Heart right ventricle (tissue), 16 donors: ENCODE measurements at regions of chr6 and their contacts with region 1.

Region 1: DNA sequence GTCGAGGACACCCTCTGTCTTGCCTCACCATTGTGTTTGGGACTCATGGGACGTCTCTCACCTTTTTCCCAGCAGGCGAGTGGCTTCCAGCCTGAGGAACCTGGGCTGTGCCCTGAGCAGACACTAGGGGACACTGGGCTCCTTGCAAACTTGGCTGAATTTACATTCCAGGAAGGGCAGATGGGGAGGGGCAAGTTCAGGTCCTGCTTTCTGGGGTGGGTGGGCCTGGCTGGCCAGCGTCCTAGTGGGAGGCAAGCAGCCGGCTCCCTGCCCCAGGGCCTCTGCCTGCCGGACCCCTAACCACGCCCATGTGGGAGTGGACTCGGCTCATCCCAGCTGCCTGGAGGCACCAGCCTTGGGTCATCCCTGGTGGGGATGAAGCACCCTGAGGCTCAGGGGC is 48.2 kb upstream of the MLN start:
- DNase-seq: no peak
- ATAC-seq: peak in 4 of 8 donors; percentile 56 to 68 (median 64)
- H3K4me3 ChIP-seq: no peak overlapping the region
- H3K27ac ChIP-seq: no peak overlapping the region
- H3K4me1 ChIP-seq: peaks cover 0 to 3% (median 0%) of the 10 kb centered on the region in 9 donors
- H3K27me3 ChIP-seq: peaks cover 0 to 79% (median 42%) of the 10 kb centered on the region in 7 donors
- CTCF ChIP-seq: peak in 7 of 9 donors; percentile 27 to 52 (median 48)

Region 2: GRCh38 chr6:34027445-34027936 is 175.5 kb after region 1 on chr6:
- intact Hi-C with region 1: loop called in 6 of 10 experiments (anchors 5 to 10 kb)
- DNase-seq: peak; percentile 9 to 49
- ATAC-seq: peak; percentile 32 to 75 (median 65)
- H3K4me3 ChIP-seq: no peak overlapping the region
- H3K27ac ChIP-seq: no peak overlapping the region
- H3K4me1 ChIP-seq: no peaks in the 10 kb centered on the region
- H3K27me3 ChIP-seq: peaks cover 0 to 73% (median 27%) of the 10 kb centered on the region in 7 donors
- CTCF ChIP-seq: peak; percentile 41 to 88 (median 73)

Region 3: GRCh38 chr6:34145161-34146020 is 293.4 kb after region 1 on chr6:
- intact Hi-C with region 1: loop called in 1 of 10 experiments (anchors 10 kb)
- DNase-seq: no peak
- ATAC-seq: peak in 7 of 8 donors; percentile 14 to 54 (median 38)
- H3K4me3 ChIP-seq: peak overlapping the region in 9 of 10 donors; percentile 23 to 52 (median 42)
- H3K27ac ChIP-seq: no peak overlapping the region
- H3K4me1 ChIP-seq: peaks cover 9 to 36% (median 24%) of the 10 kb centered on the region in 9 donors
- H3K27me3 ChIP-seq: peaks cover 28 to 94% (median 79%) of the 10 kb centered on the region in 7 donors
- CTCF ChIP-seq: no peak